Activated CD4-positive, alpha-beta T cell treated with anti-CD3 and anti-CD28 coated beads, Interleukin-2, amount 10 ng/mL, durations not matched to agents 24 days and 14 days (primary cell): ENCODE measurements at regions of chr9 and their contacts with region 1.

Region 1: DNA sequence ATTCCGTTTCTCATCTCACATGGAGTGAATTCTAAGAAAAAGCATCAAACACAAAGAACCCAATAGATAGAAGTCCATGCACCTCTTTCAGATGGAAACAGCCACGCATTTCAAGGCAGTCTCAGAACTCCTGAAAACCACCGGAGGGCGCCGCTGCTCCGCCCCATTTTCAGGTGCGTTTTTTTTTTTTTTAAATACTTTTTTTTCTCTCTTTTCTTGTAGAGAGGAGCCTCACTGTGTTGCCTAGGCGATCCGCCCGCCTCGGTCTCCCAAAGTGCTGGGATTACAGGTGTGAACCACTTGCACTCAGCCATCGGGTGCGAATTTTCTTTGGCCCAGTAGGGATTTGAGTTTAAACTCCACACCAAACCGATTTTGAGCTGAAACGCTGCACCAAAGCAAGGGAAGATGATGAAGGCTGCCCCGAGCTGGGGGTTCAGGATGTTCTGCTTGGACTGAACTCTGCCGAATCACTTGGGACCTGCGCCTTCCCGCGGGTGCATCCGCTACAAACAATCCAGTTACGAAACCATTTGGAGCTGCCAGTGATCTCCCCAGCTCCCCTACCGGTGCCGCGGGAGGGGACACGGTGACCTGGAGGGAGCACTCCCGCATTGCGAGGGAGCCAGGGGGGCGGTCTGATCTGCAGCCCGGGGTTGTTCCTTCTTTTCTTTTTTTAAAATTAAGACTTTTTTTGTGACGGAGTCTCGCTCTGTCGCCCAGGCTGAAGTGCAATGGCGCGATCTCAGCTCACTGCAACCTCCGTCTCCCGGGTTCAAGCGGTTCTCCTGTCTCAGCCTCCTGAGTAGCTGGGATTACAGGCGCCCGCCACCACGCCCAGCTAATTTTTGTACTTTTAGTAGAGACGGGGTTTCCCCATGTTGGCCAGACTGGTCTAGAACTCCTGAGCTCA is 1.4 kb downstream of the PTGR1 start:
- DNase-seq: peak; percentile 86
- H3K4me3 Mint-ChIP-seq: peak overlapping the region; percentile 89
- H3K27ac Mint-ChIP-seq: no peak overlapping the region
- H3K4me1 Mint-ChIP-seq: peaks cover 16% of the 10 kb centered on the region
- H3K27me3 Mint-ChIP-seq: peaks cover 35% of the 10 kb centered on the region

Region 2: DNA sequence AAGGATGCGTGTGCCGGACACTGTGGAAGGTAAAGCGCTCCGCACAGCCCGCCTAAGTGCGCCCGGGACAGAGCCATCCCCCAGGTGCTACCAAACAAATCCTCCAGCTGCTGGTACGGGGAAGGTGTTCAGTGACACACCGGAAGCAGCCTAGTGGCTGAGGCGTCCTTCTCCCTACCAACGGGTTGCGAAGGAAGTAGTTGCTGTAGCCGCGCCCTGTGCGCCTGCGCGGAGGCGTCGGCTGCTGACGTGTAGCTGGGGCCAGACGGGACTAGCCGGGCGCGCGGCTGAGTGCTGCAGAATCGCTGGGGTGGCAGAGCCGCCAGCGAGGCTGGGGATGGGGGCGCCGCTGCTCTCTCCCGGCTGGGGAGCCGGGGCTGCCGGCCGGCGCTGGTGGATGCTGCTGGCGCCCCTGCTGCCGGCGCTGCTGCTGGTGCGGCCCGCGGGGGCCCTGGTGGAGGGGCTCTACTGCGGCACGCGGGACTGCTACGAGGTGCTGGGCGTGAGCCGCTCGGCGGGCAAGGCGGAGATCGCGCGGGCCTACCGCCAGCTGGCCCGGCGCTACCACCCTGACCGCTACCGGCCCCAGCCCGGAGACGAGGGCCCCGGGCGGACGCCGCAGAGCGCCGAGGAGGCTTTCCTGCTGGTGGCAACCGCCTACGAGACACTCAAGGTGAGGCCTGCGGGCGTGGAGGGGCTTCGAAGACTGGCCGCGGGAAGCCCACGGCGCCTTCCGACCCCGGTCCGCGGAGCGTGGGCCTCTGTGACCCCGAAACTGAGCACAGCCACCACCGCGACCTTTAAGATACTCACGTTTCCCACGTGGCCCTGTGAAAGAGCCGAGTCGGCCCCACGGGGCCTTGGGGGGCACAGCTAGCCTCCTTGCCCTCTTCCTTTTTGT is 33.2 kb after region 1 on chr9 and contains the start of gene DNAJC25:
- intact Hi-C with region 1: loop called (anchors 2 kb)
- DNase-seq: peak; percentile 99
- H3K4me3 Mint-ChIP-seq: peak within 1 kb of the TSS; percentile 98
- H3K27ac Mint-ChIP-seq: peak within 1 kb of the TSS; percentile 92
- H3K4me1 Mint-ChIP-seq: peaks cover 42% of the 10 kb centered on the region
- H3K27me3 Mint-ChIP-seq: no peaks in the 10 kb centered on the region
- total RNA-seq, gene DNAJC25: 7.1 and 7.5 TPM in 2 replicates

Region 3: GRCh38 chr9:111691672-111692329 is 93.7 kb after region 1 on chr9:
- intact Hi-C with region 1: loop called (anchors 1 kb)
- DNase-seq: no peak
- H3K4me3 Mint-ChIP-seq: no peak overlapping the region
- H3K27ac Mint-ChIP-seq: no peak overlapping the region
- H3K4me1 Mint-ChIP-seq: peaks cover 5% of the 10 kb centered on the region
- H3K27me3 Mint-ChIP-seq: no peaks in the 10 kb centered on the region

Region 4: GRCh38 chr9:111731916-111732315 is 133.8 kb after region 1 on chr9:
- intact Hi-C with region 1: no loop called
- DNase-seq: no peak
- H3K4me3 Mint-ChIP-seq: no peak overlapping the region
- H3K27ac Mint-ChIP-seq: no peak overlapping the region
- H3K4me1 Mint-ChIP-seq: no peaks in the 10 kb centered on the region
- H3K27me3 Mint-ChIP-seq: no peaks in the 10 kb centered on the region